IMR-90 (cell line): ENCODE measurements at regions of chr5 and their contacts with region 1.

Region 1: DNA sequence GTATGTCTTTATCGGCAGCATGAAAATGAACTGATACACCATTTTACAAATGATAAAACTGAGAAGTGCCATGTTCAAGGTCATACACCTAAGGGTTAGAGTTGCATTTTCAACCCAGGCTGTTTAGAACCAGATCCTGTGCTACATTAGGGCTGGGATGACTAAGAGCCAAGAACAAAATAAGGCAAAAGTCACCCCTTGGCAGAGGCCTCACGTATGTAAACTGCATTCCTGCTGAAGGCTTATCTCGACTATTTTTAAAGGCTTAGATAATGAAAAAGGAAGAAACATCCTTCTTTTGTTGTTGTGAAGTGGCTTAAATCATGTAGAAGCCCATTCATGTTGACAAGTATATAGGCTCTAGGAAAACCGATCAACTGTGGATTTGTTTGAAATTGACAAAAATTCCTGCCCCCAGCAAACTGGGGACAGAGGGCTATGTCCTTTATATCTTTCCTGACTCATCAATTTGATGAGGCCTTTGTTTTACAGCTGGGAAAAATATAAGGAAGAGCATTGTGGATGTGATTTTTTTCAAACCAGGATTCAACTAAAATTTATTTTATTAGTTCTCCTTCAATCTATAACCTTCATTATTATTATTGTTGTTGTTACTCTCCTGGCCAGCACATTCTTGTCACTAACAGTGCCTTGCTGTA is 196.5 kb downstream of the SNX18 start:
- DNase-seq: peak; percentile 85
- ATAC-seq: peak; percentile 94
- H3K4me3 ChIP-seq: no peak overlapping the region
- H3K27ac ChIP-seq: peak overlapping the region; percentile 75
- H3K4me1 ChIP-seq: peaks cover 15% of the 10 kb centered on the region
- H3K27me3 ChIP-seq: no peaks in the 10 kb centered on the region
- CTCF ChIP-seq: no peak
- POLR2A ChIP-seq: no peak
- RAD21 ChIP-seq: no peak

Region 2: GRCh38 chr5:53834500-53834899 is 879.6 kb before region 1 on chr5:
- CTCF ChIA-PET with region 1: no interaction called
- POLR2A ChIA-PET with region 1: no interaction called
- dilution Hi-C with region 1: no loop called
- in situ Hi-C with region 1: no loop called
- intact Hi-C with region 1: no loop called
- DNase-seq: no peak
- ATAC-seq: no peak
- H3K4me3 ChIP-seq: no peak overlapping the region
- H3K27ac ChIP-seq: no peak overlapping the region
- H3K4me1 ChIP-seq: no peaks in the 10 kb centered on the region
- H3K27me3 ChIP-seq: no peaks in the 10 kb centered on the region
- CTCF ChIP-seq: no peak
- POLR2A ChIP-seq: no peak
- RAD21 ChIP-seq: no peak

Region 3: DNA sequence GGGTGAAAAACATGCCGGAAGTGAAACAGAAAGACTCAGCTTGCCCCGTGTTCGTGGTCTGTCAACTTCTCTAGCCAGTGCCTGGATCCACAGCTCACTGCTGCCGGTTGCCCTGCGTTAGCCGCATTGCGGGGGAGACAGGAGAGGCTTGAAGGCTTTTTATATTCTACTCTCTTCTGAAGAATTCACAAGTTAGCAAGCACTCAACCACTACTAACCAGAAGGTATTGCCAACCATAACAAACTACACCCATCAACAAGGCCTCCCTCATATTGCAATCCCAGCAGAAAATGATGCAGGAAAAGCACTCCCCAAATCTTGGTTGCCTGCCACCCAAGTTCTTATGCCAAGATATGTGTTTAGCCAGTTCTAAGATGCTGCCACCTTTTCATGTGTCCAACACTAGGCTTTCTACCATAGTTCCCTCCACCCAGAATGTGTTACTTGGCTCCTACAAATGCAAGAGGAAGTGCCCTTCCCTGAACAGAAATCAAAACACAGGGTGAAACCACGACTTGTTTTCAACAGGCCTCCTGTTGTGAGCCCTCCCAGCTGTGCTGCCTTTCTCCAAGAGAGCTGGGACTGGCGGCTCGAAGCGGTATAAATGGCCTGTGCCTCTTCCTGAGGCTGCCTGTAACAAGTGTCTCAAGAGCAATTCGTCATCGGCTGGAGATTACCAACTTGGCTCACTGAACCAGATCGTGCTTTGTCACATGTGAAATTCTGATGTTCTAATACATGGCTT is 67.5 kb before region 1 on chr5:
- CTCF ChIA-PET with region 1: no interaction called
- POLR2A ChIA-PET with region 1: interaction called, 14 read pairs
- dilution Hi-C with region 1: no loop called
- in situ Hi-C with region 1: no loop called
- intact Hi-C with region 1: no loop called
- DNase-seq: peak; percentile 81
- ATAC-seq: peak; percentile 82
- H3K4me3 ChIP-seq: no peak overlapping the region
- H3K27ac ChIP-seq: peak overlapping the region; percentile 96
- H3K4me1 ChIP-seq: peaks cover 27% of the 10 kb centered on the region
- H3K27me3 ChIP-seq: no peaks in the 10 kb centered on the region
- CTCF ChIP-seq: no peak
- POLR2A ChIP-seq: no peak
- RAD21 ChIP-seq: no peak